ENCODE measurements at regions of chr5 and their contacts with region 1.

Region 1: DNA sequence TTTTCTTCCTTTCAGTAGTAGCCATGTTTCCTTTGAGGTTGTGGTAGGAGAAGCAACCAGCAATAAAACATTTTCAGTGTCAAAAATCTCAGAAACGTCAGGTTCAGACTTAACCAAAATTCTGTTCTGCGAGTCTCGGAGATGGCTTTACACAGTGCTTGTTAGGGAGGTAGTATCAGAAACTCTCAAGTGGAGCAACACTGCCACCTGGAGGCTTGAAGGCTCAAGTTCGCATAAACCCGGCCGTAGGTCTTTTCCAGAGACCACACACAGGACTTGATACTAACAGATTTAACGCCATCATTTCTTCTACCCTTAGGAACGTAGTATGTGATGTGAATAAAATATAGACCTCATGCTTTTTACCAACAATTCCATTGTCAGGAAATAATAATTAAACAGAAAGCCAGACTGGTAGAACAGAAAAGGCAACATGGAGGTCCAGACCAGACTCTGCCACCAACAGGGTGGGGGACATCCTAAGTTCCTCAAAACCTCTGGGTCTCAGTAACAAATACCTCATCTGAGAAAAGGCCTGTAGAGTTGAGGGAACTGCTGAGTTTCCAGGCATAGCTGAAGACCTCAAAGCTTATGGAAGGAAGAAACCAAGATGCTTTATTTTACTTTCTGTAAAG is 8.5 kb downstream of the PTGER4 start:
- DNase-seq: peak; percentile 76 to 88 (median 82)
- ATAC-seq: peak; percentile 84 to 92 (median 92)
- H3K4me3 ChIP-seq: peak overlapping the region in 8 of 12 donors; percentile 58 to 96 (median 86)
- H3K27ac ChIP-seq: peak overlapping the region in 10 of 12 donors; percentile 1 to 97 (median 54)
- H3K4me1 ChIP-seq: peaks cover 0 to 70% (median 22%) of the 10 kb centered on the region in 12 donors
- H3K27me3 ChIP-seq: no peaks in the 10 kb centered on the region
- CTCF ChIP-seq: peak; percentile 78 to 94 (median 86)
- POLR2A ChIP-seq: no peak

Region 2: GRCh38 chr5:39714036-39714698 is 974.1 kb before region 1 on chr5:
- intact Hi-C with region 1: loop called in 8 of 10 experiments (anchors 2 to 10 kb)
- DNase-seq: peak in 1 of 5 donors; percentile 14
- ATAC-seq: peak in 1 of 4 donors; percentile 53
- H3K4me3 ChIP-seq: no peak overlapping the region
- H3K27ac ChIP-seq: peak overlapping the region in 2 of 12 donors; percentile 6 to 25
- H3K4me1 ChIP-seq: peaks cover 0 to 8% (median 0%) of the 10 kb centered on the region in 12 donors
- H3K27me3 ChIP-seq: no peaks in the 10 kb centered on the region
- CTCF ChIP-seq: peak; percentile 35 to 67 (median 56)
- POLR2A ChIP-seq: no peak

Region 3: GRCh38 chr5:40029711-40030495 is 658.3 kb before region 1 on chr5:
- intact Hi-C with region 1: loop called in 1 of 10 experiments (anchors 5 kb)
- DNase-seq: no peak
- ATAC-seq: no peak
- H3K4me3 ChIP-seq: no peak overlapping the region
- H3K27ac ChIP-seq: no peak overlapping the region
- H3K4me1 ChIP-seq: peaks cover 0 to 9% (median 0%) of the 10 kb centered on the region in 12 donors
- H3K27me3 ChIP-seq: no peaks in the 10 kb centered on the region
- CTCF ChIP-seq: no peak
- POLR2A ChIP-seq: no peak

Region 4: GRCh38 chr5:40399349-40399748 is 288.9 kb before region 1 on chr5:
- intact Hi-C with region 1: loop called in 5 of 10 experiments (anchors 5 to 10 kb)
- DNase-seq: no peak
- ATAC-seq: no peak
- H3K4me3 ChIP-seq: no peak overlapping the region
- H3K27ac ChIP-seq: no peak overlapping the region
- H3K4me1 ChIP-seq: peaks cover 0 to 26% (median under 1%) of the 10 kb centered on the region in 12 donors
- H3K27me3 ChIP-seq: no peaks in the 10 kb centered on the region
- CTCF ChIP-seq: no peak
- POLR2A ChIP-seq: no peak

Region 5: GRCh38 chr5:40437452-40437861 is 250.8 kb before region 1 on chr5:
- intact Hi-C with region 1: loop called in 2 of 10 experiments (anchors 10 kb)
- DNase-seq: no peak
- ATAC-seq: peak in 2 of 4 donors; percentile 41 to 54
- H3K4me3 ChIP-seq: no peak overlapping the region
- H3K27ac ChIP-seq: peak overlapping the region in 1 of 12 donors; percentile 78
- H3K4me1 ChIP-seq: peaks cover 0 to 36% (median 0%) of the 10 kb centered on the region in 12 donors
- H3K27me3 ChIP-seq: no peaks in the 10 kb centered on the region
- CTCF ChIP-seq: no peak
- POLR2A ChIP-seq: no peak

Region 6: GRCh38 chr5:40736103-40736875 is 48.0 kb after region 1 on chr5:
- intact Hi-C with region 1: loop called in 3 of 10 experiments (anchors 2 to 5 kb)
- DNase-seq: no peak
- ATAC-seq: peak in 3 of 4 donors; percentile 14 to 73 (median 62)
- H3K4me3 ChIP-seq: no peak overlapping the region
- H3K27ac ChIP-seq: no peak overlapping the region
- H3K4me1 ChIP-seq: peaks cover 0 to 34% (median 26%) of the 10 kb centered on the region in 12 donors
- H3K27me3 ChIP-seq: no peaks in the 10 kb centered on the region
- CTCF ChIP-seq: peak; percentile 56 to 88 (median 78)
- POLR2A ChIP-seq: no peak

Measured in heart left ventricle (tissue), 16 donors.